H1 (cell line): ENCODE measurements at regions of chr11 and their contacts with region 1.

Region 1: DNA sequence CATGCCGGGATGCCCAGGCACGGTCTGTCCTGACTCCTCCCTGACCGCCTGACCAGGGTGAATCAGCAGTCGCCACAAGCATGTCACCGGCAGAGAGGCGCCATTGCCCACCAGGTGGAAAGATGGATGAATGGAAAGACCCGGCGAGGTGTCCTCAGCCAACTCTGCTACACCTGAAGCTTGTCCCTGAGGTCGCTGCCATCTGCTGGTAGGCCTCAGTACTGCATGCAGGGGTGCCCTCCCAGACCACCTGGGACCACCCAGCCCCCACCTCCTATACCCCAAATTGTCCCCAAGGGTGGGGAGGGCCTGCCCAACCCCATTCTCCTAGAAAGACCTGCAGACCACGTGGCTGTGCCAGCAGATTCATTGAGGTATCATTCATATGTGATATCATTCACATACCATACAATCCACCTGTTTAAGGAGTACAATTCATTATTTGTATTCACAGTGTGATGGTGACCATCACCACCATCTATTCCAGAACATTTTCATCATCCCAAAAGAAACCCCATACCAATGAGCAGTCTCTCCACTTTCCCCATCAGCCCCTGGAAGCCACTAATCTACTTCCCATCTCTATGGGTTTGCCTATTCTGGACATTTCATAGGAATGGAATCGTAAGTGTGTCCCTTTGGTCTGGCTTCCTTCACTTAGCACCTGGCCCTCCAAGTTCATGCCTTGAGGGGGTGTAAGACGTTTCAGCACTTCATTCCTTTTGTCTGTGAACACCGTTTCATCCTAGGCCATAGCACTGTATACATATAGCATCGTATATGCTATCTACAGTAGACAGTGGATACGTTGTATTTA is 17.5 kb downstream of the FGF3 start:
- DNase-seq: peak; percentile 59 to 96
- H3K4me3 ChIP-seq: no peak overlapping the region
- H3K27ac ChIP-seq: no peak overlapping the region
- H3K4me1 ChIP-seq: peaks cover 0 to 5% (median 0%) of the 10 kb centered on the region in 4 experiments; a peak in 3 of 7 replicates
- H3K27me3 ChIP-seq: no peaks in the 10 kb centered on the region; a peak in 1 of 7 replicates
- CTCF ChIP-seq: peak; percentile 89 to 97 (median 91)
- EP300 ChIP-seq: no peak
- POLR2A ChIP-seq: no peak
- RAD21 ChIP-seq: peak; percentile 77 to 87

Region 2: GRCh38 chr11:69321877-69322361 is 479.8 kb before region 1 on chr11:
- CTCF ChIA-PET with region 1: no interaction called
- POLR2A ChIA-PET with region 1: no interaction called
- DNase-seq: no peak
- H3K4me3 ChIP-seq: no peak overlapping the region
- H3K27ac ChIP-seq: no peak overlapping the region
- H3K4me1 ChIP-seq: peaks cover 0 to 5% (median 1%) of the 10 kb centered on the region in 4 experiments; a peak in 2 of 7 replicates
- H3K27me3 ChIP-seq: 0 out of 7 replicates have a peak, but pooled peaks cover 0 to 2% (median 0%) of the 10 kb centered on the region in 4 experiments
- CTCF ChIP-seq: no peak
- EP300 ChIP-seq: no peak
- POLR2A ChIP-seq: no peak
- RAD21 ChIP-seq: no peak

Region 3: GRCh38 chr11:69497221-69497787 is 304.4 kb before region 1 on chr11:
- CTCF ChIA-PET with region 1: no interaction called
- POLR2A ChIA-PET with region 1: no interaction called
- DNase-seq: peak in 1 of 2 experiments; percentile 21
- H3K4me3 ChIP-seq: no peak overlapping the region
- H3K27ac ChIP-seq: no peak overlapping the region
- H3K4me1 ChIP-seq: peaks cover 0 to 3% (median under 1%) of the 10 kb centered on the region in 4 experiments; a peak in 1 of 7 replicates
- H3K27me3 ChIP-seq: no peaks in the 10 kb centered on the region; a peak in 1 of 7 replicates
- CTCF ChIP-seq: no peak
- EP300 ChIP-seq: no peak
- POLR2A ChIP-seq: no peak
- RAD21 ChIP-seq: no peak

Region 4: DNA sequence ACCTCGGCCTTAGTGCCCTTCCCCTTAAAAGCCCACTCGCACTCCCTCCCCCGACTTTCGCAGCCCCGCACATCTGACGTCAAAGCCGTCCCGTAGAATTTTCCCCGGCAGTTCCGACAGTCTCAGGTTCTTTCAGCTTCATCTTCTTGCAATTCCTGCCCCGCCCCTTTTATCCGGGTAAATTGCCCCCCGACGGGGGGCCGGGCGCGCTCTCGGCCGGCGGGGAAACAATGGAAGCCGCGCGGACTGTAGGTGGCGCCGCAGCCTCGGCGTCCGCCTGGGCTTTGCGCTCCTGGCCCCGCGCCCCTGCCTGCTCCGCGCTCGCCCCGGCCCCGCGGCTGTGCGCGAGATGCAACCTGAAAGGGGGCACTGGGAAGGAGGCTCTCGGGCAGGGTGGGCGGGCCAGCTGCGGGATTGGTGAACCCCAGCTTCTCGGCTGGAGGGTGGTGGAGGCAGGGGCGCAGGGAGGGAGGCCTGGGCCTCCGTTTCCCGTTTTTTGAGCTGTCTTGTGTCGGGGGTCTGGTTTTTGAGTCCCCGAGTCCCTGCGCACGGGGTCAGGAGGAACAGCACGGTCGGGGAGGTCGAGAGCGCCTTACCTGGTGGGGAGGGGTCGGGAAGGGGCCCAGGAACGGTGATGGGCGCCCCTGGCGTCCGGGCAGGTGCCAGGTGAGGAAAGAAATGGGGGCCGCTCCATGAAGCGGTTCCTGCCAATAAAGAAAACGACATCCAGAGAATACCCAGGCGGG is 97.0 kb before region 1 on chr11:
- CTCF ChIA-PET with region 1: interaction called, 12 read pairs
- POLR2A ChIA-PET with region 1: interaction called, 6 read pairs
- DNase-seq: peak in 1 of 2 experiments; percentile 96
- H3K4me3 ChIP-seq: peak overlapping the region; percentile 37 to 78 (median 62)
- H3K27ac ChIP-seq: 0 out of 2 replicates have a peak overlapping the region, but pooled peaks have one; percentile 44
- H3K4me1 ChIP-seq: peaks cover 11 to 36% (median 24%) of the 10 kb centered on the region in 4 experiments
- H3K27me3 ChIP-seq: peaks cover 0 to 26% (median 17%) of the 10 kb centered on the region in 4 experiments; a peak in 5 of 7 replicates
- CTCF ChIP-seq: peak; percentile 63 to 76 (median 75)
- EP300 ChIP-seq: no peak
- POLR2A ChIP-seq: no peak
- RAD21 ChIP-seq: peak; percentile 70 to 82

Region 5: GRCh38 chr11:69791276-69792180 is 10.2 kb before region 1 on chr11:
- CTCF ChIA-PET with region 1: interaction called, 11 read pairs
- POLR2A ChIA-PET with region 1: interaction called, 3 read pairs
- DNase-seq: no peak
- H3K4me3 ChIP-seq: no peak overlapping the region
- H3K27ac ChIP-seq: no peak overlapping the region
- H3K4me1 ChIP-seq: peaks cover 0 to 11% (median 2%) of the 10 kb centered on the region in 4 experiments; a peak in 2 of 7 replicates
- H3K27me3 ChIP-seq: no peaks in the 10 kb centered on the region
- CTCF ChIP-seq: no peak
- EP300 ChIP-seq: no peak
- POLR2A ChIP-seq: no peak
- RAD21 ChIP-seq: no peak

Region 6: DNA sequence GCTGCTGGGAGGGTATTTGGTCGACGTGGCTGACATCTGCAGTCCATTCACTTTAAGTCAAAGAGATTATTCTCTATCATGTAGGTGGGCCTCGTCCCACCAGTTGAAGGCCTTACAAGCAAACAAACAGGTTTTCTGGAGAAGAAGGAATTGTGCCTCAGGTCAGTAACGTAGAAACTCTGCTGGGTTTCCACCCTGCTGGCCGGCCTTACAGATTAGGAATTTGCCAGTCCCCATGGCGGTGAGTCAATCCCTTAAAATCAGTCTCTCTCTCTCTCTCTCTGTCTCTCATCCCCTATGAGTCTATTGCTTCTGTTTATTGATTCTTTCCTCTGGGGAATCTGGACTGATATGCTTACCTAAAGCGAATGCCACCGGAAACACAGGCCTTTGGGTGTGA is 92.9 kb after region 1 on chr11:
- CTCF ChIA-PET with region 1: no interaction called
- POLR2A ChIA-PET with region 1: no interaction called
- DNase-seq: no peak
- H3K4me3 ChIP-seq: no peak overlapping the region
- H3K27ac ChIP-seq: no peak overlapping the region
- H3K4me1 ChIP-seq: peaks cover 3 to 12% (median 6%) of the 10 kb centered on the region in 4 experiments; a peak in 4 of 7 replicates
- H3K27me3 ChIP-seq: peaks cover 0 to 24% (median 11%) of the 10 kb centered on the region in 4 experiments; a peak in 5 of 7 replicates
- CTCF ChIP-seq: no peak
- EP300 ChIP-seq: no peak
- POLR2A ChIP-seq: no peak
- RAD21 ChIP-seq: no peak